Sigmoid colon (tissue), 7 donors: ENCODE measurements at regions of chr11 and their contacts with region 1.

Region 1: DNA sequence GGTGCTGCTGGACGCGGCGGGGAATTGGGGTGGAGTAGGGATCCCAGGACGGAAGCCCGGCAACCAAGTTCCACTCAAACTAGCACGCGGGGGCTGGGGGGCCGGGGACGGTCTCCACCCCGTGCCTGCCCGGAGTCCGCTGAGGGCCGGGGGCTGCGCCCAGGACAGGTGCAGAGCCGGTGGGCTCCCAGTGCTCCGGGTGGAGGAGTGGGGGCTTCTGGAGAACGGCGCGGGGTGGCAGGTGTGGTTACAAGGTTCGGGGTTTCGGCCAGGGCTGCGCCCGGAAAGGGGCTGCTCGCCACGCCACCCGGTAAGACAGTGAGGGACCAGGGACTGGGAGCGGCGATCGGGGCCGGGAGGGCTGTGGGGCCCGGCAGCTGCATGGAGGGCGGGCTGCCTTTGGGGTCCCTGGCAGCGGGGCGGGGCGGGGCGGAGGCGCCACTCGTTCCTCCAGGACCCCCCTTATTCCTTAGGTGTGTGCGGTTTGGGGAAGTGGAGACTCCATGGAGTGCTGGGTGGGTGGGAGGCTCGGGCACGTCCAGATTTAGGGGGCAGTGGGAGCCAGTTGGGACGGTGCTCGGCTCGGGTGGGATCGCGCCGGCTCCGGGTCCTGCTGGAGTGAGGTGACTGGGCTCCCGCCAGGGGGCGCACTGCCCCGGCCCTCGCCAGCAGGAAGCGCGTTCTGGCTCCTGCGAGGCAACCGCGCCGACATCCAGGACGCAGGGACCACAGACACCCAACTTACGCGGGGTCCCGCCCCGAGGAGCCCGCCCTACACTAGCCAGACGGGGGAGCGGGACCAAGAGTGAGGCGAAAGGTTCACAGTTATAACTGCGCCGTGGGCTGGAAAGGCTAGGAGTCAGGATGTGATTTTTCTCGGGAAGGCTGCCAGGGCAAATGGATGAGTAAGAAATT is 868 bp downstream of the TSPAN18 start:
- DNase-seq: peak; percentile 93
- H3K4me3 ChIP-seq: peak overlapping the region; percentile 72 to 90 (median 82)
- H3K27ac ChIP-seq: peak overlapping the region; percentile 87 to 95 (median 89)
- H3K4me1 ChIP-seq: peaks cover 4 to 56% (median 51%) of the 10 kb centered on the region in 4 donors
- H3K27me3 ChIP-seq: no peaks in the 10 kb centered on the region
- CTCF ChIP-seq: peak; percentile 86 to 96 (median 92)
- EP300 ChIP-seq: no peak
- POLR2A ChIP-seq: peak in 1 of 2 donors; percentile 12

Region 2: GRCh38 chr11:44893846-44894617 is 166.4 kb after region 1 on chr11:
- intact Hi-C with region 1: loop called (anchors 1 kb)
- DNase-seq: peak; percentile 91
- H3K4me3 ChIP-seq: peak overlapping the region in 1 of 4 donors; percentile 9
- H3K27ac ChIP-seq: peak overlapping the region; percentile 80 to 89 (median 84)
- H3K4me1 ChIP-seq: peaks cover 0 to 36% (median 24%) of the 10 kb centered on the region in 4 donors
- H3K27me3 ChIP-seq: no peaks in the 10 kb centered on the region
- CTCF ChIP-seq: peak; percentile 86 to 97 (median 92)
- EP300 ChIP-seq: no peak
- POLR2A ChIP-seq: no peak